ENCODE measurements at regions of chr11 and their contacts with region 1.

Region 1: DNA sequence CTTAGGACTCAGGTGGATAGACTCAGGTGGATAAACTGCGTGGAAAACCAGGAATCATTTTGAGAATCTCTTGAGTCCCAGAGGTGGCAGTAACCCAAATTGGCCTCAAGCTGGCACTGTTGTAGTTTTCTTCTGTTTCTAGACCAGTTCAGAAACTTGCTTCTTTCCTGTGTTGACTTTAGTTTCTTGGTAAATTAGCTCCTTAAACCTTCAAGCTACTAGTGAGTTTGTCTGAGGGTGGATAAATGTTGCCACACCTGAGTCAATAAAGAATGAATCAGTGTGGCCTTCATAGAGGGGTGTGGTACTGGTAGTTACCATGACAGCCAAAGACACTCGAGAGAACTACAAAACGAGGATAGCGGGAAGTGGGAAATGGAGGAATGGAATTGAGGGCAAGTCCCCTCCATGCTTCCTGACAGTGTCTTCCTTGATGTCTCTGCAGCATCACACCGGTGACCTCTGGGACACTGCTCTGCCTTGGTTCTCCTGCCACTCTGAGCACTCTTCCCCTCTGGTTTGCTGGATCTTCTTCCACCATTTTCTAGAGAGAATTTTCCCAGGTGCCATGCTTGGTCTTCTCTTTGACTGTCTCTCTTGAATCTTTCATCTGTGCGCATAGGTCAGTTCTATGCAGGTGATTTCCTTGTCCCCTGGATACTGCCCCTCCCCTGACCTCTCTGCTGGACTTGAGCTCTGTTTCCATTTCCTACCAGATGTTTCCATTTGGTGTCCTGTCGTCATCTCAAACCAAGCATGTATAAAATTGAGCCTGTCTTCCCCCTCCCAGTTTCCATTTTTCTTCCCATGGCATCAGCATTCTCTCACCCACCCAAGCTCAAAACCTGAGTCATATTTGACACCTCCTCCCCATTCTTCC is 7.2 kb downstream of the POLD4 start:
- DNase-seq: peak in 2 of 9 experiments; percentile 44 to 60
- ATAC-seq: peak; percentile 75
- H3K4me3 ChIP-seq: no peak overlapping the region
- H3K4me3 Mint-ChIP-seq: peak overlapping the region; percentile 42
- H3K27ac ChIP-seq: no peak overlapping the region
- H3K27ac Mint-ChIP-seq: peak overlapping the region; percentile 76
- H3K4me1 ChIP-seq: peaks cover 40% of the 10 kb centered on the region
- H3K4me1 Mint-ChIP-seq: peaks cover 53% of the 10 kb centered on the region
- H3K27me3 ChIP-seq: no peaks in the 10 kb centered on the region
- H3K27me3 Mint-ChIP-seq: no peaks in the 10 kb centered on the region
- CTCF ChIP-seq: peak; percentile 70

Region 2: DNA sequence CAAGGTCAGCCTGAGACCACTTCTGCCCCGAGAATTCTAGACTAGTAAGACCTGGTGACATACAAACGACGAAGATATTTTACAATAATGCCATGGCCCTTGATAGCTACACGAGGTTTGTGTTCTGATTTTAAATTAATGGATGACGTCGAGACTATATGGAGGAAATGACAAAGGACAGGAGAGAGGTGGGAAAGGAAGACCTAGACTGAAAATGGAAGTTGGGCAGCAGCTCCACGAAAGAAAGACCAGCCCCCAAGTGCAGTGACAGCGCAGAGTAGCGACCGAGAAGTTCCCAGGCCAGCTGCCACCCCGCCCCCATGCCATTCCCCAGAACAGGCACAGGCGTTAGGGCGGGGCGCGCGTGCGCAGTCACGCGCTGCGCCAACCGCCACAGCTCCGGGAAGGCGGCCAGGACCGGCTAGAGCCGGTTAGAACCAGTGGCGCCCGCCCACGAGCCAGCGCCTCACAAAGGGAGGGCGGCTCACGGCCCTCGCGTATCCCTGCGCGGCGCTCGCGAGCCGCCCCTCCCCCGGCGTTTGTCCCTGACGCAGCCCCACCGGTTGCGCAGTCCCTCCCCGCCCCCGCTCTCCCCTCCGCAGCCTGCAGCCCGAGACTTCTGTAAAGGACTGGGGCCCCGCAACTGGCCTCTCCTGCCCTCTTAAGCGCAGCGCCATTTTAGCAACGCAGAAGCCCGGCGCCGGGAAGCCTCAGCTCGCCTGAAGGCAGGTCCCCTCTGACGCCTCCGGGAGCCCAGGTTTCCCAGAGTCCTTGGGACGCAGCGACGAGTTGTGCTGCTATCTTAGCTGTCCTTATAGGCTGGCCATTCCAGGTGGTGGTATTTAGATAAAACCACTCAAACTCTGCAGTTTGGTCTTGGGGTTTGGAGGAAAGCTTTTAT is 1848.8 kb before region 1 on chr11:
- CTCF ChIA-PET with region 1: no interaction called
- POLR2A ChIA-PET with region 1: no interaction called
- intact Hi-C with region 1: no loop called
- DNase-seq: peak; percentile 95 to 99 (median 98)
- ATAC-seq: peak; percentile 80
- H3K4me3 ChIP-seq: peak overlapping the region; percentile 72 to 84
- H3K4me3 Mint-ChIP-seq: no peak overlapping the region
- H3K27ac ChIP-seq: peak overlapping the region; percentile 98 to 99
- H3K27ac Mint-ChIP-seq: no peak overlapping the region
- H3K4me1 ChIP-seq: peaks cover 13% of the 10 kb centered on the region
- H3K4me1 Mint-ChIP-seq: peaks cover 19% of the 10 kb centered on the region
- H3K27me3 ChIP-seq: no peaks in the 10 kb centered on the region
- H3K27me3 Mint-ChIP-seq: no peaks in the 10 kb centered on the region
- CTCF ChIP-seq: no peak

Region 3: DNA sequence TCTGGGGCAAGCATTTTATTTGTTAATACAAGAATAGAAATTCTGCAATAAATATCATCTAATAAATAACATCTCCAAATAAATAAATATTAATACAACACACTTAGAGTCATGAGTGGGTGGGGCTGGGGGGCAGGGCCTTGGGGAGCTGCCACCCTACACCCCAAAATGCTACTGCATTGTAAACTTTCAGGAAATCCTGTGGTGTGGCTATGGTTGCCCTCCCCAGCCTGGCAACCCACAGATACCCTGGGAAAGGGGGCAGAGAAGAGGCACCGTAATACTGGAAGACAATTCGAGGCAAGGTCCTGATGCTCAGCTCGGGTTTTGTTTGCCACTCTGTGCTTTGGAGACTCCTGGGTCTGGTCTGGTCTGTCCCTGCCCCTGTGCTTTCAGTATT is 18.0 kb after region 1 on chr11:
- CTCF ChIA-PET with region 1: interaction called, 1,319 read pairs
- POLR2A ChIA-PET with region 1: interaction called, 3 read pairs
- intact Hi-C with region 1: no loop called
- DNase-seq: peak in 1 of 9 experiments; percentile 43
- ATAC-seq: no peak
- H3K4me3 ChIP-seq: no peak overlapping the region
- H3K4me3 Mint-ChIP-seq: peak overlapping the region; percentile 2
- H3K27ac ChIP-seq: peak overlapping the region in 1 of 2 experiments; percentile 50
- H3K27ac Mint-ChIP-seq: no peak overlapping the region
- H3K4me1 ChIP-seq: peaks cover 33% of the 10 kb centered on the region
- H3K4me1 Mint-ChIP-seq: peaks cover 49% of the 10 kb centered on the region
- H3K27me3 ChIP-seq: no peaks in the 10 kb centered on the region
- H3K27me3 Mint-ChIP-seq: no peaks in the 10 kb centered on the region
- CTCF ChIP-seq: no peak

Region 4: DNA sequence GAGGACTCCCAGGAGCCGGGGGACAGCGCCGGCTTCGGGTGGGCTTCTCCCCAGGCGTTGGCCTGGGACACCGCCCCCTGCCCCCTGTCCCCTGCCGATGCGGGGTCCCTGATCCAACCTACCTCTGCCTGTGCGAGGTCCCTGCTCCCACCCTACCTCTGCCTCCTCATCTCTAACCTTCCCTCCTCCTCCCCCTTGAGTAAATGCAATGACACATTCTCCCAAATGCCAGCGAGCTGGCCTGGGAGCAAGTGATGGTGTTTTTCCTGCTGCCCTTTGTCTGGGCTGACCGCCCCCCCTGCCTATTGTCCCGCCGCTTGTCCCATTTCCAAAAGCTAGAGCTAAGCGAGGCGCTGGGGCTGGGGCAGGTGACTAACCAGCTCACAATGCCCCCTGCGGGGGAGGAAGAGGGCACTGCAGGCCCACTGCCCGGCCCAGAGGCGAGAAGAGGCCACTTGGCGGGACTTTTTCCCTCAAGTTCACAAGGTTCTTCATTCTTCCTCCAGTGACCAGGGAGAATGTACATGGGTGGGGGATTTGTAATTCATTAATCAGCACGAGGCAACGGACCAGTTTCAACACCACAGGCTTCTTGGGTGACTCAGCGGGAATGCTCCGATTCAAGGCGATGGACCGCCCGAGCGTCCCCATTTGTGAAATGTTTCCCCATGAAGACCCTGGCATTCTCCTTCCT is 27.9 kb after region 1 on chr11:
- CTCF ChIA-PET with region 1: interaction called, 1,319 read pairs
- POLR2A ChIA-PET with region 1: interaction called, 17 read pairs
- intact Hi-C with region 1: no loop called
- DNase-seq: peak in 7 of 9 experiments; percentile 41 to 75 (median 59)
- ATAC-seq: peak; percentile 27
- H3K4me3 ChIP-seq: peak overlapping the region; percentile 43 to 61
- H3K4me3 Mint-ChIP-seq: peak overlapping the region; percentile 79
- H3K27ac ChIP-seq: peak overlapping the region in 1 of 2 experiments; percentile 21
- H3K27ac Mint-ChIP-seq: no peak overlapping the region
- H3K4me1 ChIP-seq: peaks cover 47% of the 10 kb centered on the region
- H3K4me1 Mint-ChIP-seq: peaks cover 48% of the 10 kb centered on the region
- H3K27me3 ChIP-seq: no peaks in the 10 kb centered on the region
- H3K27me3 Mint-ChIP-seq: peaks cover 8% of the 10 kb centered on the region
- CTCF ChIP-seq: peak; percentile 47

Region 5: GRCh38 chr11:67382276-67383136 is 36.3 kb after region 1 on chr11:
- CTCF ChIA-PET with region 1: interaction called, 1,319 read pairs
- POLR2A ChIA-PET with region 1: interaction called, 63 read pairs
- intact Hi-C with region 1: loop called (anchors 1 kb)
- DNase-seq: peak; percentile 72 to 90 (median 86)
- ATAC-seq: peak; percentile 98
- H3K4me3 ChIP-seq: no peak overlapping the region
- H3K4me3 Mint-ChIP-seq: no peak overlapping the region
- H3K27ac ChIP-seq: no peak overlapping the region
- H3K27ac Mint-ChIP-seq: no peak overlapping the region
- H3K4me1 ChIP-seq: peaks cover 5% of the 10 kb centered on the region
- H3K4me1 Mint-ChIP-seq: peaks cover 5% of the 10 kb centered on the region
- H3K27me3 ChIP-seq: no peaks in the 10 kb centered on the region
- H3K27me3 Mint-ChIP-seq: no peaks in the 10 kb centered on the region
- CTCF ChIP-seq: peak; percentile 90